ENCODE measurements at regions of chr14 and their contacts with region 1.

Region 1: GRCh38 chr14:103920981-103921854 is 7.0 kb upstream of the TDRD9 start:
- DNase-seq: peak; percentile 95
- ATAC-seq: peak; percentile 100
- H3K4me3 ChIP-seq: peak overlapping the region; percentile 62 to 92 (median 84)
- H3K4me3 Mint-ChIP-seq: peak overlapping the region; percentile 90
- H3K27ac ChIP-seq: peak overlapping the region; percentile 39 to 77
- H3K27ac Mint-ChIP-seq: peak overlapping the region; percentile 77
- H3K4me1 ChIP-seq: peaks cover 6 to 12% of the 10 kb centered on the region in 2 donors
- H3K4me1 Mint-ChIP-seq: peaks cover 15% of the 10 kb centered on the region
- H3K27me3 ChIP-seq: peaks cover 0 to 5% (median 1%) of the 10 kb centered on the region in 4 experiments
- H3K27me3 Mint-ChIP-seq: no peaks in the 10 kb centered on the region
- CTCF ChIP-seq: peak; percentile 95

Region 2: DNA sequence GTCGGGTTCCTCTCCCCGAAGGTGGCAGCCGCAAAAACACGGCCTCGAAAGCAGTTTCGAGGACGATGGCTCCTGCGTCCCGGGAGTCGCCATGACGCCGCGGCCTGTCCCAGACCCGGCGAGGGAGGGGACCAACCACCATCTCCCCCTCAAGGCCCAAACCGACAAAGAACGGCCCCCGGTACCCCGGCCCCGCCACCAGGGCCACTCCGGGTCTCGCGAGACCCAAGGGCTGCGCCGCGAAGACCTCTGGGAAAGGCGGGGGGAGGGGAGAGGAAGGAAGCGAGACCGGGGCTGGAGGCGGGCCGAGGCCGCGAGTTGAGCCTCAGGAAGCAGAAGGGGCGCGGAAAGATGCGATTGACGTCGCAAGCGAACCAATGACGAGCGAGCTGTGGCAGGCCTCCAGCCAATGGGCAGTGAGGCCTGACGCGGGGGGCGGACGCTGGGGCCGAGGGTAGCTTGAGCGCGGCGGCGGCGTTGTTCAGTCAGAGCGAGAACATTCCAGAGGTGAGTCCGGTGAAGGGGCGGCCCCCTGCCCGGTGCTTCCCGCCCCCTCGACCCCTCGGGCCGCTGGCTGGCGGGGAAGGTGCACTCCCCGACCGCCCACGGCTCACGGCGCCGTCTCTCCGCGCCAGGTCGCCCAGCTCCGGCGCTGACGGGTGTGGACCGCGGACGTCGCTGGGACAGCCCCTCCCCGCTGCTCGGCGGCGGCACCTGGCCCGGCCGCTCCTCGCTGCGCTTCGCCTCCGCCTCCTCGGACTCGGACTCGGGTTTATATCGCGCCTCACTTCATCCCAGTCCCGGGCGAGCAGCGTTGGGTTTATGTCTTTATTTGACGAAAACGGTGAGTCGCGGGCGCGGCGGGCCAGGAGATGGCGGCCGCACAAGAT is 587.2 kb before region 1 on chr14 and contains the start of gene EIF5:
- CTCF ChIA-PET with region 1: no interaction called
- POLR2A ChIA-PET with region 1: no interaction called
- intact Hi-C with region 1: loop called (anchors 5 kb)
- DNase-seq: peak; percentile 100
- ATAC-seq: peak; percentile 85
- H3K4me3 ChIP-seq: peak within 1 kb of the TSS; percentile 78 to 100 (median 94)
- H3K4me3 Mint-ChIP-seq: peak within 1 kb of the TSS; percentile 96
- H3K27ac ChIP-seq: peak within 1 kb of the TSS; percentile 98 to 99
- H3K27ac Mint-ChIP-seq: peak within 1 kb of the TSS; percentile 100
- H3K4me1 ChIP-seq: peaks cover 17 to 25% of the 10 kb centered on the region in 2 donors
- H3K4me1 Mint-ChIP-seq: peaks cover 42% of the 10 kb centered on the region
- H3K27me3 ChIP-seq: no peaks in the 10 kb centered on the region
- H3K27me3 Mint-ChIP-seq: no peaks in the 10 kb centered on the region
- CTCF ChIP-seq: peak; percentile 51
- total RNA-seq, gene EIF5: 314 TPM in 2 replicates

Region 3: GRCh38 chr14:103715052-103716000 is 205.9 kb before region 1 on chr14 and contains the starts of genes XRCC3 and ZFYVE21:
- CTCF ChIA-PET with region 1: no interaction called
- POLR2A ChIA-PET with region 1: no interaction called
- intact Hi-C with region 1: loop called (anchors 1 kb)
- DNase-seq: peak; percentile 100
- ATAC-seq: peak; percentile 95
- H3K4me3 ChIP-seq: peak within 1 kb of the TSS; percentile 12 to 82 (median 60)
- H3K4me3 Mint-ChIP-seq: peak within 1 kb of the TSS; percentile 91
- H3K27ac ChIP-seq: peak within 1 kb of the TSS in 1 of 2 donors; percentile 55
- H3K27ac Mint-ChIP-seq: peak within 1 kb of the TSS; percentile 85
- H3K4me1 ChIP-seq: peaks cover 15 to 24% of the 10 kb centered on the region in 2 donors
- H3K4me1 Mint-ChIP-seq: peaks cover 36% of the 10 kb centered on the region
- H3K27me3 ChIP-seq: no peaks in the 10 kb centered on the region
- H3K27me3 Mint-ChIP-seq: no peaks in the 10 kb centered on the region
- CTCF ChIP-seq: no peak
- total RNA-seq, gene XRCC3: 18.0 and 18.6 TPM in 2 replicates
- total RNA-seq, gene ZFYVE21: 18.6 and 24.3 TPM in 2 replicates

Region 4: DNA sequence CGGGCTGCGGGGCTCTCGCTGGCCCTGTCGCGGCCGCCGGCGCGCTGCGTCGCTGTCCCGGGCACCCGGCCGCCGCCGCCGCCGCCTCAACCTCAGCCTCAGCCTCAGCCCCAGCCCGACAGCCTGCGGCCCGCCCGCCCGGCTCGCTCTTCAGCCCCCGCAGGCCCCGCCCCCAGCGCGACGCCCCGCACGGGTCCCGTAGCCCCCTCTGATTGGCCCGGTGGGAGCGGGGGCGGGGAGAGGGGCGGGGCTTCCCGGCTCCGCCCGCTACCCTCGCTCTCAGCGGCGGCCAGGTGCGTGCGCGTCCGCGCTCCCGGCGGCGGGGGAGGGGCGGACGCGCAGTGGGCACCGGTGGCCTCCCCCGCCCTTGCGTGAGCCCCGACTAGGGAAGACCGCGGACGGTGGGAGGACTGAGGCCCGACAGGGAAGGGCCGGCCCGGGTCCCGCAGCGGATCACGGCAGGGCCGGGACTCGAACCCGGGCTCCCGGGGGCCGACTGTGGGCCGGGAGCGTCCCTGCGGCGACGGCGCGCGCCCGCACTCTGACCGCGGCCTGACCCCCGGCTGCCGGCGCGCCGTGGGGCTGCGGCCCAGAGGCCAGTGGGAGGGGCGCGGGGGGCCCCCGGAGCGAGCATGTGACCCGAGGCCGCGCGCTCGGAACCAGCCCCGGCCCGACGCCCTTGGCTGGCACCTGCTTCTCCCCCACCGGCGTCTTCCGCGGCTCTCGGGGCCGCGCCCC is 73.6 kb before region 1 on chr14 and contains the start of gene PPP1R13B:
- CTCF ChIA-PET with region 1: no interaction called
- POLR2A ChIA-PET with region 1: interaction called, 5 read pairs
- intact Hi-C with region 1: loop called (anchors 1 kb)
- DNase-seq: peak; percentile 95
- ATAC-seq: peak; percentile 97
- H3K4me3 ChIP-seq: peak within 1 kb of the TSS; percentile 44 to 73 (median 60)
- H3K4me3 Mint-ChIP-seq: peak within 1 kb of the TSS; percentile 91
- H3K27ac ChIP-seq: peak within 1 kb of the TSS in 1 of 2 donors; percentile 59
- H3K27ac Mint-ChIP-seq: peak within 1 kb of the TSS; percentile 83
- H3K4me1 ChIP-seq: peaks cover 10 to 14% of the 10 kb centered on the region in 2 donors
- H3K4me1 Mint-ChIP-seq: peaks cover 16% of the 10 kb centered on the region
- H3K27me3 ChIP-seq: no peaks in the 10 kb centered on the region
- H3K27me3 Mint-ChIP-seq: no peaks in the 10 kb centered on the region
- CTCF ChIP-seq: no peak
- total RNA-seq, gene PPP1R13B: 27.7 and 38.6 TPM in 2 replicates

Region 5: GRCh38 chr14:103871596-103872480 is 49.4 kb before region 1 on chr14:
- CTCF ChIA-PET with region 1: no interaction called
- POLR2A ChIA-PET with region 1: no interaction called
- intact Hi-C with region 1: loop called (anchors 1 kb)
- DNase-seq: peak; percentile 82
- ATAC-seq: peak; percentile 97
- H3K4me3 ChIP-seq: peak overlapping the region; percentile 22 to 71 (median 64)
- H3K4me3 Mint-ChIP-seq: peak overlapping the region; percentile 89
- H3K27ac ChIP-seq: peak overlapping the region in 1 of 2 donors; percentile 46
- H3K27ac Mint-ChIP-seq: peak overlapping the region; percentile 81
- H3K4me1 ChIP-seq: peaks cover 11 to 13% of the 10 kb centered on the region in 2 donors
- H3K4me1 Mint-ChIP-seq: peaks cover 7% of the 10 kb centered on the region
- H3K27me3 ChIP-seq: peaks cover 0 to 2% (median 0%) of the 10 kb centered on the region in 4 experiments
- H3K27me3 Mint-ChIP-seq: no peaks in the 10 kb centered on the region
- CTCF ChIP-seq: no peak

Region 6: DNA sequence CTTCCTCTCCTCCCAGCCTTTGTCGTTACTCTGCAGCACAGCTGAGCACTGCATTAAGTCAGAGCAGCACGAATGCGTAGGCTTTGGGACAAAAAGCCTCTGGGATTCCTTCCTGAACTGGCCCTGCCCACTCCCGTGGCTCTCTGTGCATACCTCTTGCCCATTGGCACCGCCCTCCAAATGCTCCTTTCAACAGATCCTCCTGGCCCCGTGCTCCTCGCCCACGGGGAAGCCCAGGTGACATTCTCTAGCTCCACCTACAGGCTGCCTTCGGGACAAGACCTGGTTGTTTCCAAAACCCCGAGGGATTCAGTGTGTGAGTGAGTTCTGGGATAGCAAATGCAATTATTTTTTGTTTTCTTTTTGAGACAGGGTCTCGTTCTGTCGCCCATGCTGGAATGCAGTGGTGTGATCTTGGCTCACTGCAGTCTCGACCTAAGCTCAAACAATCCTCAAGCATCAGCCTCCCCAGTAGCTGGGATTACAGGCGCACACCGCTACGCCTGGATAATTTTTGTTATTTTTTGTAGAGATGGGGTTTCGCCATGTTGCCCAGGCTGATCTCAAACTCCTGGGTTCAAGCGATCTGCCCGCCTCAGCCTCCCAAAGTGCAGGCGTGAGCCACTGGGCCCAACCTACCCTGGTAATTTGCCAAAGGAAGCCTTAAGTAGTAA is 10.8 kb before region 1 on chr14:
- CTCF ChIA-PET with region 1: interaction called, 12 read pairs
- POLR2A ChIA-PET with region 1: no interaction called
- intact Hi-C with region 1: no loop called
- DNase-seq: peak; percentile 72
- ATAC-seq: peak; percentile 73
- H3K4me3 ChIP-seq: peak overlapping the region in 1 of 5 experiments; percentile 15
- H3K4me3 Mint-ChIP-seq: peak overlapping the region; percentile 51
- H3K27ac ChIP-seq: no peak overlapping the region
- H3K27ac Mint-ChIP-seq: no peak overlapping the region
- H3K4me1 ChIP-seq: peaks cover 4 to 10% of the 10 kb centered on the region in 2 donors
- H3K4me1 Mint-ChIP-seq: peaks cover 8% of the 10 kb centered on the region
- H3K27me3 ChIP-seq: no peaks in the 10 kb centered on the region
- H3K27me3 Mint-ChIP-seq: no peaks in the 10 kb centered on the region
- CTCF ChIP-seq: peak; percentile 78